Endothelial cell of umbilical vein (primary cell): ENCODE measurements at regions of chr20 and their contacts with region 1.

Region 1: GRCh38 chr20:53915446-53916172 is 154.8 kb downstream of the BCAS1 start:
- DNase-seq: peak; percentile 96
- H3K4me3 ChIP-seq: peak overlapping the region; percentile 47 to 81 (median 67)
- H3K27ac ChIP-seq: peak overlapping the region; percentile 82
- H3K4me1 ChIP-seq: peaks cover 30% of the 10 kb centered on the region
- H3K27me3 ChIP-seq: no peaks in the 10 kb centered on the region
- CTCF ChIP-seq: peak; percentile 76 to 88
- POLR2A ChIP-seq: no peak

Region 2: DNA sequence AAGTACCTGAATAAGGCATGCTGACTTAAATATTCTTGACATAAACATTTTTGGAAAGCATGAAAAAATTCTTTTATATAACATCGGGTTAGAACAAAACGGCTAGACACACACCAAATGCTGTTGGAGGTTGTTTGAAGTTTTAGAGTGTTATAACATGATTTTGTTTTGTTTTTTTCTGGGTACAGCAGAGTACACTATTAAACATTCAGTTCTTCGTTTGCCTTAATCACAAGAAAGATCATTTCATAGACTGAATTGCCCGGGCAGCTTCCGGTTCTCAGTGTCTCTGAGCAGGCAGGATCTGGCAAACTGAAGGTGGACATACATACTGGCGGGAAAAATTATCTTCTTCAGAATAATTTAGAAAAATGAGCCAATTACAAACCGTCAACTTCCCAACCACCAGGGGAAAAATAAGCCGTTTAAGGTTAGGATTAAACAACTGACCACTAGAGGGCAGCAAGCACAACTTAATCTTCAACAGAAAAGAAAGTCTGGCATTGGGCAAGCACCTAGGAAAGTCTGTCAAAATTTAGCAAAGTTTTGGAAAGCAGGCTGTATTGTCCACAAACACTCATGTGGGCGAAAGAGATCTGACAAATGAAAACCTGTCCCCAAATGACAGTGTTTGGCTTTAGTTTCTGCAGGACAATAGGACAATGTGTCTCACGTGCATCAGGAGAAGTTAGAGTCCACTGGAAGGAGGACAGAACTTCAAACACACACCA is 337.0 kb before region 1 on chr20:
- CTCF ChIA-PET with region 1: interaction called, 87 read pairs
- POLR2A ChIA-PET with region 1: no interaction called
- dilution Hi-C with region 1: no loop called
- intact Hi-C with region 1: loop called (anchors 1 kb)
- DNase-seq: peak; percentile 90
- H3K4me3 ChIP-seq: peak overlapping the region in 1 of 3 experiments; percentile 23
- H3K27ac ChIP-seq: peak overlapping the region; percentile 43
- H3K4me1 ChIP-seq: peaks cover 20% of the 10 kb centered on the region
- H3K27me3 ChIP-seq: no peaks in the 10 kb centered on the region
- CTCF ChIP-seq: peak; percentile 60 to 75
- POLR2A ChIP-seq: peak; percentile 13

Region 3: GRCh38 chr20:53643031-53643832 is 272.4 kb before region 1 on chr20:
- CTCF ChIA-PET with region 1: interaction called, 10 read pairs
- POLR2A ChIA-PET with region 1: no interaction called
- dilution Hi-C with region 1: no loop called
- intact Hi-C with region 1: loop called (anchors 2 kb)
- DNase-seq: peak; percentile 91
- H3K4me3 ChIP-seq: peak overlapping the region in 1 of 3 experiments; percentile 28
- H3K27ac ChIP-seq: peak overlapping the region; percentile 89
- H3K4me1 ChIP-seq: peaks cover 20% of the 10 kb centered on the region
- H3K27me3 ChIP-seq: no peaks in the 10 kb centered on the region
- CTCF ChIP-seq: no peak
- POLR2A ChIP-seq: no peak

Region 4: GRCh38 chr20:53828682-53829254 is 86.8 kb before region 1 on chr20:
- CTCF ChIA-PET with region 1: interaction called, 9 read pairs
- POLR2A ChIA-PET with region 1: no interaction called
- dilution Hi-C with region 1: no loop called
- intact Hi-C with region 1: loop called (anchors 1 kb)
- DNase-seq: peak; percentile 96
- H3K4me3 ChIP-seq: peak overlapping the region in 2 of 3 experiments; percentile 19 to 57
- H3K27ac ChIP-seq: peak overlapping the region; percentile 100
- H3K4me1 ChIP-seq: peaks cover 35% of the 10 kb centered on the region
- H3K27me3 ChIP-seq: no peaks in the 10 kb centered on the region
- CTCF ChIP-seq: no peak
- POLR2A ChIP-seq: peak; percentile 47

Region 5: DNA sequence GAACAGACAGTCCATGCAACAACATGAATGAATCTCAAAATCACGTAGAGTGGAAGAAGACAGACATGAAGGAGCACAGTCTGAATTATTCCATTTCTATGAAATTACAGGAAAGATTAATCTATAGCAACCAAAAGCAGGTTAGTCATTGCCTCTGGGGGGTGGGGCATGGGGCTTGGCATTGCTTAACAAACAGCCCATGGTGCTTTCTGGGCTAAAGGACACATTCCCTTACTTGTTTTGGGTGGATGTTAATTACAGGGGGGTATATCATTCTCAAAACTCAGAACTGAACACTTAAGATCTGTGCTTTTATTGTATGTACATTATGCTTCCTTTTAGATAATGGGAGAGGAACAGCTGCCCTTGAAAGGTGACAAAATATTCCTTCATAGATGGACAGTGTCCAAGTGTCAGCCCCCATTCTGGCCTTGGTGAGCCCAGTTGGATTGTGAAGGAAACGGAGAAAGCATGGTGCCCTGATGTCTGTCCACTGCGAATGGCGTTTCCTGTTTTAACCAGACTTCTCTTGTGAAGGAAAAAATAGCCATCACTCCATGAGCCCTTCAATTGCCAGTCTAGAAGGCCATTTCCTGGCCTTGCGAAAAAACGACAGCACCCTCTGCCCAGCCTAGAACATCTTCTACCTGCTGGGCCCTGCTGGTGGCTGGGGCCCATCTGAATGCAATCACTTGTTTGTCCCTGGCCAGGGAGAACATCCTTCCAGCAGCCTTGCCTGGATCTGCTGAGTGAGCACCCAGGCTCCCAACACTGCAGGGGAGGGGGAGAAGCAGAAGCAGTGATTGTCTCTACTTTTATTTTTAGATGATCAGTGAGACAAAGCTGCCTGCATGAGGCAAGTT is 24.9 kb before region 1 on chr20:
- CTCF ChIA-PET with region 1: no interaction called
- POLR2A ChIA-PET with region 1: interaction called, 10 read pairs
- dilution Hi-C with region 1: no loop called
- intact Hi-C with region 1: no loop called
- DNase-seq: peak; percentile 70
- H3K4me3 ChIP-seq: no peak overlapping the region
- H3K27ac ChIP-seq: peak overlapping the region; percentile 42
- H3K4me1 ChIP-seq: peaks cover 9% of the 10 kb centered on the region
- H3K27me3 ChIP-seq: no peaks in the 10 kb centered on the region
- CTCF ChIP-seq: no peak
- POLR2A ChIP-seq: no peak

Region 6: GRCh38 chr20:53926428-53927028 is 10.9 kb after region 1 on chr20:
- CTCF ChIA-PET with region 1: interaction called, 24 read pairs
- POLR2A ChIA-PET with region 1: no interaction called
- dilution Hi-C with region 1: no loop called
- intact Hi-C with region 1: loop called (anchors 1 kb)
- DNase-seq: peak; percentile 96
- H3K4me3 ChIP-seq: no peak overlapping the region
- H3K27ac ChIP-seq: peak overlapping the region; percentile 77
- H3K4me1 ChIP-seq: peaks cover 13% of the 10 kb centered on the region
- H3K27me3 ChIP-seq: no peaks in the 10 kb centered on the region
- CTCF ChIP-seq: no peak
- POLR2A ChIP-seq: peak; percentile 38